B cell (primary cell): ENCODE measurements at regions of chr13 and their contacts with region 1.

Region 1: DNA sequence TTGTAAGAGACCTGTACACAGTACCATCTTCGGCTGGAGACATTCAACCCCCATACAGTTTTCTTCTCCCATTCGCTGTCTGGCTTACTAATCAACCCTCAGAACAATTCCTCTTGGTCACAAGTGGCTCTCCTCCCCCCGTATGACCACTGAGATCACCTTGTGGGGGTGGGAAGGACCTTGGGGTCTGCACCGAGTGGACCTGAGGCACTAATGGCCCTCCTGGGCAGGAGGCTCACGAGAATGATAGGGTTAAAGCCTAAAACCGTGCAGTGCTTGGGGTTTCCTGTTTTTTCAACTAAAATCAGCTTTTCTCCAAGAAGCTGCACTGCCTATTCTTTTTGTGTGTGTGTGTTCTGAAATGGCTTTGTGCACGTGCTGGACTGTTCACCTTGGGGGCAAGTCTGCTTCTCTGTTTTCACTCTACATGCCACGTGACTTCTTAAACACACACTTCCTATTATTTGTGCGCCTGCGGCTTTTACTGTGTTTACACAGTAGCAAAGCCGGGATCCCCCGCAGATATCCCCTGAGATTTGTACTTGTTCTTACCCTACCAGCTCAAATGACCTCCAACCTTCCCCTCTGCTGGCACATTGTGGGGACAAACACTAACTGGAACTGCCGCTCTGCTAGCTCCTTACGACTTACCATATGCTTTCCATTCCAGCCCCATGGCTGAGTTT is 12.3 kb downstream of the RBM26 start:
- DNase-seq: peak; percentile 90
- ATAC-seq: peak; percentile 92
- H3K4me3 ChIP-seq: peak overlapping the region in 4 of 5 experiments; percentile 7 to 51 (median 38)
- H3K4me3 Mint-ChIP-seq: peak overlapping the region; percentile 76
- H3K27ac ChIP-seq: peak overlapping the region; percentile 87 to 88
- H3K27ac Mint-ChIP-seq: peak overlapping the region; percentile 85
- H3K4me1 ChIP-seq: peaks cover 28 to 44% of the 10 kb centered on the region in 2 donors
- H3K4me1 Mint-ChIP-seq: peaks cover 62% of the 10 kb centered on the region
- H3K27me3 ChIP-seq: no peaks in the 10 kb centered on the region
- H3K27me3 Mint-ChIP-seq: no peaks in the 10 kb centered on the region
- CTCF ChIP-seq: no peak

Region 2: DNA sequence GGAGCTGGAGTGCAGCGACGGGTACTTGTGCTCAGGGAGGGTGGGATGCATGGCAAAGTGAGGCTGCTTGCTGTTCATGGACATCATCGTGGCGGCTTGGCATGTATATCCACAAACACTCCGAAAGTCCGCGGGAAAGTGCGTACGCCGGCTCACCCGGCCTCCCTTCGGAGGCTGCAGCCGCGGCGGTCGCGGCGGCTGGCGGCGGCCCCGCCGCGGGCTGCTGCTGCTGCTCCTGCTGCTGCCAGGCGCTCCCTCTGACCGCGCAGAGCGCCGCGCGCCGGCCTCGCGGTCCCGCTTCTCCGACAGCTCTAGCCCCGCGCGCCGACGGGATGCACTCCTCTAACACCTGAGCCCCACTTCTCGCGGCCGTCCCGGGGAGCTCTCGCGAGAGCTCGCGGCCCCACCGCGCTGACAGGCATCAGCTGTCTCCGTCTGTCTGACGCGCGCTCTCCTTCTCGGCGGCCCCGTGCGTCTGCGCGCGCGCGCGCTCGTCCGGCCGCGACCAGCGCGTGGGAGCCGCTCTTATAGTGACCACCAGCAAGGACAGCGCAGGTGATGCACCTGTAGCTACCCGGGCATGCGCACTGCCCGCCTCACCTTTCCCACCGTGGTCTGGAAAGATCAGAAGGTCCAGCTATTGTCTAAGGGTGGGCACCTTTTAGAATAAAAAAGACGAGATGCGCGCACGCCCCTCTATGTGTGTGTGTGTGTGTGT is 790.3 kb before region 1 on chr13 and contains the start of gene POU4F1:
- CTCF ChIA-PET with region 1: no interaction called
- POLR2A ChIA-PET with region 1: no interaction called
- intact Hi-C with region 1: loop called (anchors 5 kb)
- DNase-seq: peak; percentile 80
- ATAC-seq: peak; percentile 63
- H3K4me3 ChIP-seq: peak within 1 kb of the TSS; percentile 7 to 62 (median 38)
- H3K4me3 Mint-ChIP-seq: peak within 1 kb of the TSS; percentile 90
- H3K27ac ChIP-seq: no peak within 1 kb of the TSS
- H3K27ac Mint-ChIP-seq: peak within 1 kb of the TSS; percentile 80
- H3K4me1 ChIP-seq: peaks cover 51 to 84% of the 10 kb centered on the region in 2 donors
- H3K4me1 Mint-ChIP-seq: peaks cover 54% of the 10 kb centered on the region
- H3K27me3 ChIP-seq: peaks cover 11 to 92% (median 86%) of the 10 kb centered on the region in 4 experiments
- H3K27me3 Mint-ChIP-seq: peaks cover 82% of the 10 kb centered on the region
- CTCF ChIP-seq: no peak
- total RNA-seq, gene POU4F1: 0.17 TPM in 1 of 2 replicates, not detected in the other

Region 3: GRCh38 chr13:78620936-78621485 is 772.7 kb before region 1 on chr13:
- CTCF ChIA-PET with region 1: no interaction called
- POLR2A ChIA-PET with region 1: no interaction called
- intact Hi-C with region 1: no loop called
- DNase-seq: no peak
- ATAC-seq: no peak
- H3K4me3 ChIP-seq: no peak overlapping the region
- H3K4me3 Mint-ChIP-seq: no peak overlapping the region
- H3K27ac ChIP-seq: no peak overlapping the region
- H3K27ac Mint-ChIP-seq: no peak overlapping the region
- H3K4me1 ChIP-seq: no peaks in the 10 kb centered on the region
- H3K4me1 Mint-ChIP-seq: no peaks in the 10 kb centered on the region
- H3K27me3 ChIP-seq: no peaks in the 10 kb centered on the region
- H3K27me3 Mint-ChIP-seq: no peaks in the 10 kb centered on the region
- CTCF ChIP-seq: no peak

Region 4: DNA sequence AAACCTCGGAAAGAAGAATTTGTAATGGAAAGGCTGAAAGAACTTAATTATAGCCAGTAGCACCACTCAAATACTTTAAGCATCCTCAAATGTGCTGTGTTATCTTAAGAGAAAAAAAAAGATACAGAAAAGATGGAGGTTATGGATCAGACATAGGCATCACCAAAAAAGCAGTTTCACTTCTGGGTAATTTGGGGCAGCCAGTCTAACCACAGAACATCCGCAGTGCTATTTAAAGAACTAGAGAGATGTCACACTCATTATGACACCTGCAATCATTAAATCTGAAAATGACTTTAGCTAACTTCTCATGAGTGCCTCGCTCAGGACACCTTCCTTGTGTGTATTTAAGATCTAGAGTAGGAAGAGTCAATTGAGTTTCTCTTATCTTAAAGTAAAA is 199.4 kb before region 1 on chr13:
- CTCF ChIA-PET with region 1: no interaction called
- POLR2A ChIA-PET with region 1: no interaction called
- intact Hi-C with region 1: loop called (anchors 5 kb)
- DNase-seq: peak; percentile 86
- ATAC-seq: peak; percentile 77
- H3K4me3 ChIP-seq: peak overlapping the region in 2 of 5 experiments; percentile 26 to 45
- H3K4me3 Mint-ChIP-seq: peak overlapping the region; percentile 24
- H3K27ac ChIP-seq: peak overlapping the region in 1 of 2 donors; percentile 47
- H3K27ac Mint-ChIP-seq: peak overlapping the region; percentile 35
- H3K4me1 ChIP-seq: peaks cover 63 to 67% of the 10 kb centered on the region in 2 donors
- H3K4me1 Mint-ChIP-seq: peaks cover 62% of the 10 kb centered on the region
- H3K27me3 ChIP-seq: no peaks in the 10 kb centered on the region
- H3K27me3 Mint-ChIP-seq: no peaks in the 10 kb centered on the region
- CTCF ChIP-seq: no peak

Region 5: GRCh38 chr13:79360095-79360494 is 33.6 kb before region 1 on chr13:
- CTCF ChIA-PET with region 1: interaction called, 7 read pairs
- POLR2A ChIA-PET with region 1: no interaction called
- intact Hi-C with region 1: loop called (anchors 5 kb)
- DNase-seq: no peak
- ATAC-seq: no peak
- H3K4me3 ChIP-seq: no peak overlapping the region
- H3K4me3 Mint-ChIP-seq: no peak overlapping the region
- H3K27ac ChIP-seq: no peak overlapping the region
- H3K27ac Mint-ChIP-seq: no peak overlapping the region
- H3K4me1 ChIP-seq: peaks cover 0 to 5% of the 10 kb centered on the region in 2 donors
- H3K4me1 Mint-ChIP-seq: peaks cover 13% of the 10 kb centered on the region
- H3K27me3 ChIP-seq: no peaks in the 10 kb centered on the region
- H3K27me3 Mint-ChIP-seq: no peaks in the 10 kb centered on the region
- CTCF ChIP-seq: no peak

Region 6: GRCh38 chr13:79373916-79374315 is 19.8 kb before region 1 on chr13:
- CTCF ChIA-PET with region 1: interaction called, 5 read pairs
- POLR2A ChIA-PET with region 1: no interaction called
- intact Hi-C with region 1: loop called (anchors 2 kb)
- DNase-seq: no peak
- ATAC-seq: no peak
- H3K4me3 ChIP-seq: no peak overlapping the region
- H3K4me3 Mint-ChIP-seq: no peak overlapping the region
- H3K27ac ChIP-seq: no peak overlapping the region
- H3K27ac Mint-ChIP-seq: no peak overlapping the region
- H3K4me1 ChIP-seq: no peaks in the 10 kb centered on the region
- H3K4me1 Mint-ChIP-seq: no peaks in the 10 kb centered on the region
- H3K27me3 ChIP-seq: no peaks in the 10 kb centered on the region
- H3K27me3 Mint-ChIP-seq: no peaks in the 10 kb centered on the region
- CTCF ChIP-seq: no peak

Region 7: GRCh38 chr13:79405829-79406596 is 12.3 kb after region 1 on chr13 and contains the start of gene RBM26:
- CTCF ChIA-PET with region 1: interaction called, 24 read pairs
- POLR2A ChIA-PET with region 1: interaction called, 16 read pairs
- intact Hi-C with region 1: loop called (anchors 1 kb)
- DNase-seq: peak; percentile 97
- ATAC-seq: peak; percentile 84
- H3K4me3 ChIP-seq: peak within 1 kb of the TSS; percentile 69 to 95 (median 87)
- H3K4me3 Mint-ChIP-seq: no peak within 1 kb of the TSS
- H3K27ac ChIP-seq: peak within 1 kb of the TSS; percentile 94 to 95
- H3K27ac Mint-ChIP-seq: peak within 1 kb of the TSS; percentile 98
- H3K4me1 ChIP-seq: peaks cover 32 to 48% of the 10 kb centered on the region in 2 donors
- H3K4me1 Mint-ChIP-seq: peaks cover 26% of the 10 kb centered on the region
- H3K27me3 ChIP-seq: no peaks in the 10 kb centered on the region
- H3K27me3 Mint-ChIP-seq: no peaks in the 10 kb centered on the region
- CTCF ChIP-seq: peak; percentile 15
- total RNA-seq, gene RBM26: 159 and 165 TPM in 2 replicates